ENCODE measurements at regions of chrX and their contacts with region 1.

Region 1: GRCh38 chrX:108224727-108225621 is 133.4 kb downstream of the ATG4A start:
- DNase-seq: peak in 2 of 5 donors; percentile 3 to 4
- H3K4me3 ChIP-seq: no peak overlapping the region
- H3K4me3 Mint-ChIP-seq: peak overlapping the region in 4 of 8 donors; percentile 11 to 32 (median 16)
- H3K27ac ChIP-seq: no peak overlapping the region
- H3K27ac Mint-ChIP-seq: no peak overlapping the region
- H3K4me1 ChIP-seq: no peaks in the 10 kb centered on the region
- H3K4me1 Mint-ChIP-seq: peaks cover 0 to 6% (median 3%) of the 10 kb centered on the region in 4 donors
- H3K27me3 ChIP-seq: no peaks in the 10 kb centered on the region
- H3K27me3 Mint-ChIP-seq: peaks cover 0 to 6% of the 10 kb centered on the region in 2 donors

Region 2: GRCh38 chrX:108138814-108139702 is 85.9 kb before region 1 on chrX:
- CTCF ChIA-PET with region 1: no interaction called
- POLR2A ChIA-PET with region 1: no interaction called
- intact Hi-C with region 1: no loop called
- DNase-seq: peak in 1 of 5 donors; percentile 11
- H3K4me3 ChIP-seq: no peak overlapping the region
- H3K4me3 Mint-ChIP-seq: no peak overlapping the region
- H3K27ac ChIP-seq: no peak overlapping the region
- H3K27ac Mint-ChIP-seq: no peak overlapping the region
- H3K4me1 ChIP-seq: no peaks in the 10 kb centered on the region
- H3K4me1 Mint-ChIP-seq: no peaks in the 10 kb centered on the region
- H3K27me3 ChIP-seq: no peaks in the 10 kb centered on the region
- H3K27me3 Mint-ChIP-seq: no peaks in the 10 kb centered on the region

Region 3: DNA sequence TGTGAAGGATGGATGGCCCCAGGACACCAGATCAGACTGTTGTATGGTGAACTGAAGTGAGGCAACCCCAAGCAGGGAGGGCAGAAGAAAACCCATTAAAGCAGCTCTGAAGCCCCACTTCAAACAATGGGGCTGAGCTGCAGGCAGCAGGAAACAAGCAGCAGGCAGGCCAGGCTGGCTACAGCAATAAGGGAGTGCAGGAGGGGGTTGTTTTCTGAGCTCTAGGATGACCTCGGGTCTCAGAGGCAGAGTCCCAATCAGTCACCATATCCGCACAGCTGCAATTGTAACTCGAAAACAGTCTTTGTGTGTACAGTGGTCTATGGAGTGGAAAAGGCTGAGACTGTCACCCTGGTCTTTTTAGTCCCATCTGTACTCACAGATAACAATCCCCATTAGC is 122.8 kb after region 1 on chrX:
- CTCF ChIA-PET with region 1: no interaction called
- POLR2A ChIA-PET with region 1: no interaction called
- intact Hi-C with region 1: no loop called
- DNase-seq: no peak
- H3K4me3 ChIP-seq: no peak overlapping the region
- H3K4me3 Mint-ChIP-seq: no peak overlapping the region
- H3K27ac ChIP-seq: no peak overlapping the region
- H3K27ac Mint-ChIP-seq: no peak overlapping the region
- H3K4me1 ChIP-seq: no peaks in the 10 kb centered on the region
- H3K4me1 Mint-ChIP-seq: no peaks in the 10 kb centered on the region
- H3K27me3 ChIP-seq: no peaks in the 10 kb centered on the region
- H3K27me3 Mint-ChIP-seq: no peaks in the 10 kb centered on the region

Region 4: DNA sequence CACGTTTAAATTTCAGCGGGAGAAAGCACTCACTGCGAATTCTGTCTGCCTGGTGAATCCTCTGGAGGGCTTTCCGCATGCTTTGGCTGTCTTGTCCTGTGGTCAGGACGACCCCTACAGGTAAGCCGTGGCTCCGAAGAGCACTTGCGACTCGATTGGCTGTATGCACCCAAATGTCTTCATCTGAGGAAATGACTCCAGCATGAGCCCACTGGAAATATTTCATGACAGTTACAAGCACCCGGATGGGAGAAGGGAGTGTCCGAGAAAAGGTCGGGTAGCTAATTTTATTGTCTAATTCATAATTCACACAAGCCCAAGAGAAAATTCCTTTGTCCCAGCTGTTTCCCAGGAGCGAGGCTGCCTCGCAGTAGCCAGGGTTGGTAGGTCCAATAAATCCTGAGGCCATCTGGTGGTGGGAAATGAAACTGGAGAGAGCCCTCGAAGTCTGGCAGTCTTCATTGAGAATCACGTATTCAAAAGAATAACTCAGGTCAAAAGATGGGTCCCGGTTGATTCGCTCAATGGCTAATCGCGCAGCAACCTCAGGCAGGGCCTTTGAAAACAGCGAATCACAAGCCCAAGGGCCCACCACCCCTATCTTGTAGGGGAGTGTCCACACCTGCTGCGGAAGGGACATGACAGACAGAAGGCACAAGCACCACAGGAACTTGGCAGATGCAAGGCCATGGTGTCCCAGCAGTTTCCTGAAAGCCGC is 1250.4 kb after region 1 on chrX:
- CTCF ChIA-PET with region 1: no interaction called
- POLR2A ChIA-PET with region 1: no interaction called
- intact Hi-C with region 1: loop called (anchors 5 kb)
- DNase-seq: no peak
- H3K4me3 ChIP-seq: no peak overlapping the region
- H3K4me3 Mint-ChIP-seq: no peak overlapping the region
- H3K27ac ChIP-seq: no peak overlapping the region
- H3K27ac Mint-ChIP-seq: no peak overlapping the region
- H3K4me1 ChIP-seq: no peaks in the 10 kb centered on the region
- H3K4me1 Mint-ChIP-seq: peaks cover 0 to 3% (median under 1%) of the 10 kb centered on the region in 4 donors
- H3K27me3 ChIP-seq: no peaks in the 10 kb centered on the region
- H3K27me3 Mint-ChIP-seq: peaks cover 0 to 5% of the 10 kb centered on the region in 2 donors